Ovary (tissue), 10 donors: ENCODE measurements at regions of chrX and their contacts with region 1.

Region 1: GRCh38 chrX:48939524-48940228 is 17.7 kb downstream of the OTUD5 start:
- DNase-seq: no peak
- H3K4me3 ChIP-seq: no peak overlapping the region
- H3K27ac ChIP-seq: no peak overlapping the region
- H3K4me1 ChIP-seq: peaks cover 2% of the 10 kb centered on the region
- H3K27me3 ChIP-seq: no peaks in the 10 kb centered on the region
- CTCF ChIP-seq: no peak
- EP300 ChIP-seq: no peak
- POLR2A ChIP-seq: no peak

Region 2: GRCh38 chrX:48636776-48637175 is 302.9 kb before region 1 on chrX:
- intact Hi-C with region 1: loop called in 1 of 4 experiments (anchors 5 kb)
- DNase-seq: no peak
- H3K4me3 ChIP-seq: no peak overlapping the region
- H3K27ac ChIP-seq: no peak overlapping the region
- H3K4me1 ChIP-seq: no peaks in the 10 kb centered on the region
- H3K27me3 ChIP-seq: no peaks in the 10 kb centered on the region
- CTCF ChIP-seq: no peak
- EP300 ChIP-seq: no peak
- POLR2A ChIP-seq: no peak

Region 3: GRCh38 chrX:48989483-48989882 is 49.8 kb after region 1 on chrX:
- intact Hi-C with region 1: no loop called
- DNase-seq: peak in 1 of 5 donors; percentile 19
- H3K4me3 ChIP-seq: no peak overlapping the region
- H3K27ac ChIP-seq: no peak overlapping the region
- H3K4me1 ChIP-seq: no peaks in the 10 kb centered on the region
- H3K27me3 ChIP-seq: no peaks in the 10 kb centered on the region
- CTCF ChIP-seq: no peak
- EP300 ChIP-seq: no peak
- POLR2A ChIP-seq: no peak